ENCODE measurements at regions of chr11 and their contacts with region 1.

Region 1: DNA sequence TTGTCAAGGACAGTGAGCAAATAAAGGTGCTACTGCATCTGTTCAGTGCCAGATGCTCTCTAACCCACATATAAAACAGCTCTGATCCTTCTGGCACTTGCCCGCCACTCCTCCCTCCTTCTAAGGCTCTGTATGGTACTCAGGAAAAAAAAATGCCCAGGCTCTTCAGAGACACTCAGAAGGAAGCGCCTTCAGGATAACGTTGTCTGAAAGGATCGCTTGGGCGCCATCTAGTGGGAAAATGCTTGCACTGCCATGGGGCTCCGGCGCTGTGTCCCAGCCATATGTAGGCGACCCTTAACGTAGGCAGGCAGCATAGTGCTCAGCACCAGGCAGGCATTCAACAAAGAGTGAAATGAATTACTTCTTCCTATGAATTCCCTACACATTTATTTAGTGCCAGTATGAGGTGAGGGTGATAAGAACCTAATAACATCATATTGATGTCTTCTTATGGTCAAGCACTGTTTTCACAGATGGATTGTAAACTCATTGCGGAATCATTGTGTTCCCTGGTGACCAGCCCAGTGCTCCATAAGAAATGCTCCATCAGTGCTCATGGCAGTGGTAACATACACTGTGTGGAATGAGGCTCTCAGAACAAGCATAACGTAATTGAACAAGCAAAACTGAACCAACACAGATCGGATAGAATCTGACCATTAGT is 39.6 kb downstream of the PAMR1 start:
- DNase-seq: peak; percentile 94
- H3K4me3 ChIP-seq: no peak overlapping the region
- H3K27ac ChIP-seq: no peak overlapping the region
- H3K4me1 ChIP-seq: peaks cover 55% of the 10 kb centered on the region
- H3K27me3 ChIP-seq: no peaks in the 10 kb centered on the region

Region 2: GRCh38 chr11:35702126-35702525 is 216.3 kb after region 1 on chr11:
- in situ Hi-C with region 1: no loop called
- DNase-seq: no peak
- H3K4me3 ChIP-seq: no peak overlapping the region
- H3K27ac ChIP-seq: no peak overlapping the region
- H3K4me1 ChIP-seq: no peaks in the 10 kb centered on the region
- H3K27me3 ChIP-seq: no peaks in the 10 kb centered on the region

Region 3: DNA sequence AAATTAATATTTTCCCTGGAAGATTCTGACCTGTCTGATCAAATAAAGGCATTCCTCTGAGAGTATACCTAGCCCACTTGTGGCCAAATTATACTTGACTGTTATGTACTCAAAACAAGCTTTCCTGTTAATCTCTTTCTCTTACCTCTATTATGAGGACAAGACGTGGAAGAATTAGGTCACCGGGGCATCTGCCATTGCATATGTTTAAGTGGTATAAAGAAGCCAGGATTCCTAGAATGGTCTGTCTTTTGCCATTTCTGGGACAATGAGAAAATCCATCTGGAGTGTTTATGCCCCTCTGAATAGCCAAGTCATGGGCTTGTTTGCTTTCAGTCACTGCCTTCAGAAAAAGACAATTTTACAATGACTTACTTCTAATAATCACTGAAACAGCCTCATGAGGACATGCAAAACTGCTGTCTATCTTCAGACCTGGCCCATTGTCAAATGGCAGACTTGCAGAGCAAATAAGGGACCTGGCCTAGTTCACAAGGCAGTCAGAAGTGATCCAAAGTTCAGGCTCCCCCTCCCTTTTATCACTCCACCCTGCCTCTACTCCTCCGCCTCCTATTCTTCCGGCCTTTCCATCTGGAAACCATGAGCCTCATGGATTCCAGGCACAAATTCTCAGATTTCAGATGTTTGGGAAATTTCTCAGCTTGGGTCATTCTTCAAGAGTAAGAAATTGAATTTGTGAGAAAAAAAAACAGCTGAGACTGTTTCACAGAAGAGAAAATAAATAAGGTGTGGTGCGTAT is 329.9 kb after region 1 on chr11:
- in situ Hi-C with region 1: loop called (anchors 10 kb)
- DNase-seq: peak; percentile 23
- H3K4me3 ChIP-seq: no peak overlapping the region
- H3K27ac ChIP-seq: no peak overlapping the region
- H3K4me1 ChIP-seq: no peaks in the 10 kb centered on the region
- H3K27me3 ChIP-seq: no peaks in the 10 kb centered on the region

Region 4: DNA sequence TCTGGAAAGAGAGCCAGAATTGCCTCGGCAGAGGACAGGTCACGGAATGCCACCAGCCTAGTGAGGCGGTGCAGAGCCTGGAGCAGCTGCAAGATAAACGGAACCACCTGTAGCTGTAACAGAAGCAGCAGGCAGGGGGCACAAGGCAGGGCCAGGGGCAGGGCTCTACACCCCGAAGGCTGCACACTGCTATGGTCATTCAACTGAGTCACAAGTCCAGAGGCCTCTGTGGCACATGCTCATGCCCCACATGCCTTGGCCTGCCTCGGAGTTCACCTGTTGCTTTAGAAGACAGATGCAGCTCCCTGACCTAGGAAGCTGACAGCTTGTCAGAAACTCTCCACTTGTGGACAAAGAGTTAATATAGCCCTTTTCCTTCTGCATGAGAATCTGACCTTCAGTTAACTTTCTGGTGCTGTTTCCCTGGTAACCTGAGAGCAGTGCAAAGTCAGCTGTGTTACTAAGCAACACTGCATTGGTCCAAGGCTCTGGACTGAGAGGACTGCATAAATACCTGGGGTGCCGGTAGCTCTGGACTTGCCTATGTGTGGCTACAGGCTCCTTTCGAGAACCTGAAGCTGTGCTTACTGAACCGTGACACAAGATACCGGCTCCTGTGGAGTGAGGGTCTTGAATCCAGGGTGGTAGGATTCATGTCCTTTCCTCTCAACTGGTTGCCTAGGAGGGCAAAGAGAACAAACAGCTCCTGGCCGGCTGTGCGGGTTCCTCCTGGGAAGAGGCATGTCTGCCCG is 792.9 kb after region 1 on chr11:
- in situ Hi-C with region 1: loop called (anchors 10 kb)
- DNase-seq: no peak
- H3K4me3 ChIP-seq: no peak overlapping the region
- H3K27ac ChIP-seq: no peak overlapping the region
- H3K4me1 ChIP-seq: 0 out of 2 replicates have a peak, but pooled peaks cover 9% of the 10 kb centered on the region
- H3K27me3 ChIP-seq: no peaks in the 10 kb centered on the region